Breast epithelium (tissue), 4 donors: ENCODE measurements at regions of chr15 and their contacts with region 1.

Region 1: DNA sequence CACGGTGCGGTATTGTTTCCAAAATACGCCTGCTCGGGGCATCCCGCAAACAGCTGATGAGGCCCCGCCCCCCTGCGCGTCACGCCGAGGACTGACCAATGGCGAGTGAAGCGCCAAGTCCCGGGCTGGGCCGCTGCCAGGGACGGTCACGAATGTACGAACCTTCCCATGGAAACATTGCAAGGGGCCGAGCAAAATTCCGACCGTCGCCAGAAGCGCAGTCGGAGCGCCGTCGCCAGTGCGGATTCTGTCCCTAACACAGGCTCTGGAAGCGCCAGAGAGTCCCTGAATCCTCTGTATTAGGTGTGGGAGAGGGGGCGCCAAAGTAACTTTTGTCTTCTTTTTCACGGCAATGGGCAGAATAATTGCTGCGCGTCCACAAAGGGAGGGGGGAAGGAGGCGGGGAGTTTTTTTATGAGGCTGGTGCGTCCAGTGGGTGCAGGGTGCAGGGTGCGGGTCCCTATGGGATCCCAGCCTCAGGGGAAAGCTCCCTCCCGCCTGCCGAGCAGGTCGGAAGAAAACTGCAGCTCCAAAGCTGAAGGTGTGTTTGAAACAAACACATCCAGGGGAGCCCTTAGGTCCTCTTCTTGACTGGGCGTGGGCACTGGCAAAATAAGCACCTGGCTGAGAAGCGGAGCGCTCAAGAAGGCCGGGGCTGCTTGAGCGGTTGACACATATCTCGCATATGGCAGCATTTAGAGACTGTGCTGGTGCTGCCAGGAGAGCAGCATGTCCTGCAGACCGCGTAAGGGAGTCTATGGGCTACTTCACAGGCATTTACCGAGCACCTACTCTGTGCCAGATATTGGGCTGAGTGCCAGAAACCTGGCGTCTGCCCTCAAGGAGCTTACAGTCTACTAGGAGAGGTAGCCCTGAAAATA is at the start of gene BMF:
- DNase-seq: peak; percentile 99 to 100
- H3K4me3 ChIP-seq: peak within 1 kb of the TSS; percentile 71 to 88 (median 87)
- H3K27ac ChIP-seq: peak within 1 kb of the TSS; percentile 91 to 96
- H3K4me1 ChIP-seq: peaks cover 5 to 30% of the 10 kb centered on the region in 2 donors
- H3K27me3 ChIP-seq: no peaks in the 10 kb centered on the region
- CTCF ChIP-seq: peak in 2 of 3 donors; percentile 26 to 34
- POLR2A ChIP-seq: no peak
- total RNA-seq, gene BMF: 8.2 to 24.4 (median 9.3) TPM

Region 2: DNA sequence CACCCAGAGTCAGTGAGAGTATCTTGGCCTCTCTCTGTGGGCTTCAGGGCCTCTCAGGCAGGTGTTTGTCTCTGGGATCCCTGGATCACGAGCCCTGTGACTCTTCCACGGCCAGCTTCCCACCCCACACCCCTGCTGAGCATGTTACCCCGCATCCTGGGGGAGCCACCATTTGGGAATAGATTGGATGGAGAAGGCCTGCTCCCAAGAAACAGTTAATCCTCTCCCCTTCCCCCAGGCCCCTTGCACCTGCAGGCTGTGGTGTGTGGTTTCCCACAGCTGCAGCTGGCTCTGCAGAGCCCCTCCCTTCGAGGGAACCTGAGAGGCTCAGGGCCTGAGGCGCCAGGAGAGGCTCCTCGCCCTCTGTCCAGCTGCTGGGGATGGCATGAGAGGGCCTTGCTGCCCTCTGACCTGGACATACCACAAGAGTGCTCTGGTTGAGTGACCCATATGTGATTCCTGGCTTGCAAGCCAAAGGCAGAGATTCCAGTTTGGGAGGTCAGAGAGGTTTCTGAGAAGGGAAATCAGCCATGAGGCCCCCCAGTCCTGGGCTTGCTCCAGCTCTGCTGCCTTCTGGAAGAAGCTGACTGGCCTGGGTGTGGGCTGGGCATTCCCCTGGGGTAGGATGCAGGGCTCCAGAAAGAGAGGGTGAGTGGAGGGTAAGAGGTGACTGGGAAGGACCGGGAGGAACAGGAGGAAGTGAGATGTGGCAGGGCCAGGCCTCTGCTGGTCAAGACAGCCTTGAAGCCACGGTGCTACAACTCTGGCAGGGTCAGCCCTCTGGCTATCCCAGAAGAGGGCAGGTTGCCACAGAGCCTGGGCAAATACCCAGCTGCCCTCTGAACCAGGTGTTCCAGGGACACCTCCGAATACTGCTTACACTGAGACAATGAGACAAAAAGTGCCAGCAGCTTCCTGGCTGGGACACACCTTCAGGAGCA is 54.2 kb before region 1 on chr15:
- intact Hi-C with region 1: loop called (anchors 10 kb)
- DNase-seq: no peak
- H3K4me3 ChIP-seq: no peak overlapping the region
- H3K27ac ChIP-seq: peak overlapping the region; percentile 42 to 71
- H3K4me1 ChIP-seq: peaks cover 0 to 20% of the 10 kb centered on the region in 2 donors
- H3K27me3 ChIP-seq: no peaks in the 10 kb centered on the region
- CTCF ChIP-seq: no peak
- POLR2A ChIP-seq: no peak